ENCODE measurements at regions of chr11 and their contacts with region 1.

Region 1: GRCh38 chr11:35815556-35816315 is 128.1 kb upstream of the LDLRAD3 start:
- DNase-seq: peak in 1 of 2 donors; percentile 25
- ATAC-seq: peak; percentile 24 to 49
- H3K4me3 ChIP-seq: no peak overlapping the region
- H3K27ac ChIP-seq: no peak overlapping the region
- H3K4me1 ChIP-seq: peaks cover 26 to 28% of the 10 kb centered on the region in 2 donors
- H3K27me3 ChIP-seq: no peaks in the 10 kb centered on the region
- CTCF ChIP-seq: no peak
- POLR2A ChIP-seq: no peak

Region 2: DNA sequence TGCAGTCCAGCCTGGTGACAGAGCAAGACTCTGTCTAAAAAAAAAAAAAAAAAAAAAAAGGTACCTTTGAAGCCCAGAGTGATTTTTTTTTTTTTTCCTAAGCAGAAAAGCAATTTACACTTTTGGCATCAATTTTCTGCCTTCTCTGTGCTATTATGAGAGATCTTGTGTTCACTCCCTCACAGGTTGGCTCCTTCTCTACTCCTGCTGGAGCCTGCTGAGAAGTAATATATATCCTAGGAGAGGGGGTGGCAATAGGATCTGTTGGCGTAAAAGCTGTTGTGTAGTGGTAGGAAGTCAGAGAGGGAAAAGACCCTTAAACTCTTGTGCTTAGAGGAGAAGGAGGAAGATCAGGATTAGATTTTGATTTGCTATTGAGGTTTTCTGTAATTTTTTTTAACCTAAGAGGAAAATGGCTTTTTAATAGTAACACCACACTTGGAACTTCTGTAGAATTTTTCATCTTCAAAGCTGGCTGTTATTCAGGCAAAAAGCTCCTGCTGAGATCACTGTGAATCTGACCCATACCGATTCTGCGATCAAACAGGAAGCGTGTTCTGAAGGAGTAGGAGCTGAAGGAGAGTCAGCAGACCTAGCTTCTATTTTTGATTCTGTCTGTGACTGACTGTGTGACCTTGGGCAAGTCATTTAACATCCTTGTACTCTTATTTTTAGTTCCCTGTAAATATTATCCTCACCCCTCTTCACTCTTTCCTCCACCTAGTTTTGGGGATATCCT is 75.5 kb before region 1 on chr11:
- in situ Hi-C with region 1: no loop called
- intact Hi-C with region 1: no loop called
- DNase-seq: no peak
- ATAC-seq: no peak
- H3K4me3 ChIP-seq: no peak overlapping the region
- H3K27ac ChIP-seq: no peak overlapping the region
- H3K4me1 ChIP-seq: no peaks in the 10 kb centered on the region
- H3K27me3 ChIP-seq: no peaks in the 10 kb centered on the region
- CTCF ChIP-seq: no peak
- POLR2A ChIP-seq: no peak

Region 3: GRCh38 chr11:35765211-35765610 is 50.5 kb before region 1 on chr11:
- in situ Hi-C with region 1: no loop called
- intact Hi-C with region 1: no loop called
- DNase-seq: no peak
- ATAC-seq: no peak
- H3K4me3 ChIP-seq: no peak overlapping the region
- H3K27ac ChIP-seq: no peak overlapping the region
- H3K4me1 ChIP-seq: peaks cover 24 to 38% of the 10 kb centered on the region in 2 donors
- H3K27me3 ChIP-seq: no peaks in the 10 kb centered on the region
- CTCF ChIP-seq: no peak
- POLR2A ChIP-seq: no peak

Region 4: GRCh38 chr11:36123346-36124101 is 307.8 kb after region 1 on chr11:
- in situ Hi-C with region 1: loop called in 1 of 4 experiments (anchors 10 kb)
- intact Hi-C with region 1: no loop called
- DNase-seq: no peak
- ATAC-seq: no peak
- H3K4me3 ChIP-seq: no peak overlapping the region
- H3K27ac ChIP-seq: peak overlapping the region in 1 of 4 donors; percentile 23
- H3K4me1 ChIP-seq: peaks cover 5 to 7% of the 10 kb centered on the region in 2 donors
- H3K27me3 ChIP-seq: no peaks in the 10 kb centered on the region
- CTCF ChIP-seq: no peak
- POLR2A ChIP-seq: no peak